ENCODE measurements at regions of chr9 and their contacts with region 1.

Region 1: GRCh38 chr9:129726322-129727160 is 26.3 kb downstream of the PTGES start:
- H3K4me3 ChIP-seq: no peak overlapping the region
- H3K27ac ChIP-seq: no peak overlapping the region
- H3K4me1 ChIP-seq: no peaks in the 10 kb centered on the region
- CTCF ChIP-seq: peak; percentile 87

Region 2: DNA sequence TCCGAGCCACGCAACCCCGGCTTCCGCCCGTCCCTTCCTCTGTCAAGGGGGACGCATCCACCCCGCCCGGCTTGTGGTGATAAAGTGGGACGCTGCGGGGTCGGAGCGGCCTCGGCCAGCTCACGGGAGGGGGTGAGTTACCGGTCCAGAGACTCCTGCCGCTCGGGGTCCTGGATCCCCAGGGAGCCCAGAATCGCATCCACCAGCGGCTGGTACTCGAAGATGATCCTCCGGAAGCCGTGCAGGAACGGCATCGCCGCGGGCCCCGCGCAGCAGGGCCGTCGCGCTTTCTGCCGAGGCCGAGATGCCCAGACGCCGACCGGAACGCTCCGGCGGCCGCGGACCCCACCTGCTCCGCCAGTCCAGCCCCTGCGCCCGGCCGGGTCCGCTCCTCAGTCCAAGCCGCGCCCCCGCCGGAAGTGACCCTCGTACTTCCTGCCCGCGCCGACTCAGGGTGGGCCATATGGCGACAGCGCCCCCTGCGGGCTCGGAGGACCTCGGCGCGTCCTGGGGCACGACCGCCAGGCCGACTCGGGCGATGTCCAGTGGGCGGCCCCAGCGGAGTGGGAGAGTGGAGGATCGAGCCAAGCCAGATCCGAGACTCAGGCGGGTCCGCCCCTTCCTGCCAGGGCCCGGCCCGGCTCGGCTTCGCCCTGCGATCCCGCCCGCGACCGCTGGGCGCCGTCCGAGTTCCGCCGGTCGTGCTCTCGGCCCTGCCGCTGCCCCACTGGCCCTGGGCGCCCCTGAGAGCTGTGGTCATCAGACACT is 84.6 kb before region 1 on chr9 and contains the start of gene ASB6:
- CTCF ChIA-PET with region 1: interaction called, 26 read pairs
- POLR2A ChIA-PET with region 1: no interaction called
- H3K4me3 ChIP-seq: peak within 1 kb of the TSS; percentile 79
- H3K27ac ChIP-seq: peak within 1 kb of the TSS; percentile 70
- H3K4me1 ChIP-seq: peaks cover 11% of the 10 kb centered on the region
- CTCF ChIP-seq: peak; percentile 100

Region 3: DNA sequence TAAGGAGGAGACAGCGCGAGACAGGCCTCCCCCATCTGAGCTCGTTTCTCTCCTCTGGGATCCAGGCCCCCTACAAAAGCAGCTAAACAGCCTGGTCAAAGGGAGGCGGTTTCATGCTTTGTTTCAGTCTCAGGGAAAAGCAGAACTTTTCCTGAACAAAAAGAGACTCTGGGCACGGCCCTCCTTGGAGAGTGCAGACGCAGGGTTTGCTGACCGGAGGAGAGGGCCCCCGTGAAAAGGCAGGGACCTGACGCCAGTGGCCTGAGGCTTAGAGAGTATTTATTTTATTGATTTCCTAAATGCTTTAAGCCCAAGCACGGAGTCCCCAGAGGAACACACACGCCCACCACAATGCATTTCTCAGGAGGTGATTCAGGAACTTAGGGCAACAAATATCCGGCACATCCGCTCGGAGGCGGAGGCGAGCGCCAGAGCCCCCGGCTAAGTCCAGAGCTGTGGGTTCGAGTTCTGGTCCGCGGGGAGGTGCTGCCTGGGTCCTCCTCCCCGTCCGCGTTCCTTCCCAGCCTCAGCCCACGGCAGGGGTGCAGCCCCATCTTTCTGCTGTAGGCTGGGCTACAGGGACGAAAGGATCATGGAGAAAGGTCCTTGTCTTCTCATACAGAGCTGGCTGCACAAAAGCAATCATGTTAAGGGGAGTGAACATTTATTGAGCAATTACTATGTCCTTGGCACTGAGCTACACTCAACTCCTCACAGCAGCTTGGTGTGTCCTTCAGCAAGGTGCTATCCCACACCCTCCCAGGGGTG is 13.7 kb before region 1 on chr9:
- CTCF ChIA-PET with region 1: interaction called, 67 read pairs
- POLR2A ChIA-PET with region 1: interaction called, 6 read pairs
- H3K4me3 ChIP-seq: no peak overlapping the region
- H3K27ac ChIP-seq: peak overlapping the region; percentile 85
- H3K4me1 ChIP-seq: peaks cover 13% of the 10 kb centered on the region
- CTCF ChIP-seq: no peak

Region 4: GRCh38 chr9:129783516-129784361 is 57.2 kb after region 1 on chr9:
- CTCF ChIA-PET with region 1: interaction called, 253 read pairs
- POLR2A ChIA-PET with region 1: interaction called, 3 read pairs
- H3K4me3 ChIP-seq: no peak overlapping the region
- H3K27ac ChIP-seq: no peak overlapping the region
- H3K4me1 ChIP-seq: no peaks in the 10 kb centered on the region
- CTCF ChIP-seq: peak; percentile 74